Colonic mucosa (tissue), 4 donors: ENCODE measurements at regions of chr6 and their contacts with region 1.

Region 1: GRCh38 chr6:32825966-32826365 is 9.2 kb upstream of the HLA-DOB start:
- DNase-seq: no peak
- H3K4me3 ChIP-seq: no peak overlapping the region
- H3K27ac ChIP-seq: no peak overlapping the region
- H3K4me1 ChIP-seq: no peaks in the 10 kb centered on the region
- H3K27me3 ChIP-seq: no peaks in the 10 kb centered on the region
- CTCF ChIP-seq: peak; percentile 4

Region 2: GRCh38 chr6:31795616-31796298 is 1030.2 kb before region 1 on chr6 and contains the start of gene VARS1:
- intact Hi-C with region 1: no loop called
- DNase-seq: peak; percentile 94
- H3K4me3 ChIP-seq: peak within 1 kb of the TSS; percentile 99
- H3K27ac ChIP-seq: peak within 1 kb of the TSS; percentile 93
- H3K4me1 ChIP-seq: peaks cover 5% of the 10 kb centered on the region
- H3K27me3 ChIP-seq: no peaks in the 10 kb centered on the region
- CTCF ChIP-seq: peak; percentile 70
- total RNA-seq, gene VARS1: 40.8 to 136 TPM

Region 3: GRCh38 chr6:32785781-32786533 is 40.0 kb before region 1 on chr6:
- intact Hi-C with region 1: no loop called
- DNase-seq: peak; percentile 56
- H3K4me3 ChIP-seq: no peak overlapping the region
- H3K27ac ChIP-seq: no peak overlapping the region
- H3K4me1 ChIP-seq: no peaks in the 10 kb centered on the region
- H3K27me3 ChIP-seq: no peaks in the 10 kb centered on the region
- CTCF ChIP-seq: peak; percentile 44

Region 4: DNA sequence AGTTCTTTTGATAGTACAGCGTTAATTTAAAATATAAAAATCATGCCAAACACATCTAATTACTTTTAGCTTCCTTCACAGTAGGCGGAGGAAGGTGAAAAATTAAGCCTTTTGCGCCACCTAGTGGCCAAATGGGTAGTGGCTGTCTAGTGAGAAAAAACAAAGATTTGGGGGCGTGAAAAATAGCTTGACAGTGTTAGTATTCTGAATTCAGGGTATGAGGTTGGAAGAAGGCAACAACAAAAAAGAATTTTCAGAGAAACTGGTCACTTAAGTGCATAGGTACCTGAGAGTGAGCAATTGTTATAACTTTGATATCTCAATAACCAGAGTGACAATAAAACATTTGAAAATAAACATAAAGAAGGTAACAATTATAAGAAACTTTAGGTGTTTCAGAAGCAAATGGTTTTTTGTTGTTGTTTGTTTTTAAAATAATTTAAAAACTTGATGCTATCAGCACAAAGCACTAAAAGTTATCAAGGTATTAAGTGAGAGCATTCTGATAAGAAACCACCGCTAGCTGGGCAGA is 42.4 kb after region 1 on chr6:
- intact Hi-C with region 1: loop called (anchors 5 kb)
- DNase-seq: peak; percentile 87
- H3K4me3 ChIP-seq: no peak overlapping the region
- H3K27ac ChIP-seq: no peak overlapping the region
- H3K4me1 ChIP-seq: no peaks in the 10 kb centered on the region
- H3K27me3 ChIP-seq: no peaks in the 10 kb centered on the region
- CTCF ChIP-seq: peak; percentile 95

Region 5: GRCh38 chr6:33356295-33356694 is 530.3 kb after region 1 on chr6:
- intact Hi-C with region 1: no loop called
- DNase-seq: peak; percentile 28
- H3K4me3 ChIP-seq: no peak overlapping the region
- H3K27ac ChIP-seq: peak overlapping the region; percentile 72
- H3K4me1 ChIP-seq: no peaks in the 10 kb centered on the region
- H3K27me3 ChIP-seq: no peaks in the 10 kb centered on the region
- CTCF ChIP-seq: no peak